ENCODE measurements at regions of chr10 and their contacts with region 1.

Region 1: GRCh38 chr10:69092959-69093850 is 5.3 kb downstream of the SRGN start:
- DNase-seq: peak; percentile 84 to 89
- H3K4me3 ChIP-seq: no peak overlapping the region
- CTCF ChIP-seq: no peak
- POLR2A ChIP-seq: no peak

Region 2: GRCh38 chr10:68861253-68861652 is 232.0 kb before region 1 on chr10:
- intact Hi-C with region 1: no loop called
- DNase-seq: peak in 1 of 2 donors; percentile 14
- H3K4me3 ChIP-seq: no peak overlapping the region
- CTCF ChIP-seq: no peak
- POLR2A ChIP-seq: no peak

Region 3: DNA sequence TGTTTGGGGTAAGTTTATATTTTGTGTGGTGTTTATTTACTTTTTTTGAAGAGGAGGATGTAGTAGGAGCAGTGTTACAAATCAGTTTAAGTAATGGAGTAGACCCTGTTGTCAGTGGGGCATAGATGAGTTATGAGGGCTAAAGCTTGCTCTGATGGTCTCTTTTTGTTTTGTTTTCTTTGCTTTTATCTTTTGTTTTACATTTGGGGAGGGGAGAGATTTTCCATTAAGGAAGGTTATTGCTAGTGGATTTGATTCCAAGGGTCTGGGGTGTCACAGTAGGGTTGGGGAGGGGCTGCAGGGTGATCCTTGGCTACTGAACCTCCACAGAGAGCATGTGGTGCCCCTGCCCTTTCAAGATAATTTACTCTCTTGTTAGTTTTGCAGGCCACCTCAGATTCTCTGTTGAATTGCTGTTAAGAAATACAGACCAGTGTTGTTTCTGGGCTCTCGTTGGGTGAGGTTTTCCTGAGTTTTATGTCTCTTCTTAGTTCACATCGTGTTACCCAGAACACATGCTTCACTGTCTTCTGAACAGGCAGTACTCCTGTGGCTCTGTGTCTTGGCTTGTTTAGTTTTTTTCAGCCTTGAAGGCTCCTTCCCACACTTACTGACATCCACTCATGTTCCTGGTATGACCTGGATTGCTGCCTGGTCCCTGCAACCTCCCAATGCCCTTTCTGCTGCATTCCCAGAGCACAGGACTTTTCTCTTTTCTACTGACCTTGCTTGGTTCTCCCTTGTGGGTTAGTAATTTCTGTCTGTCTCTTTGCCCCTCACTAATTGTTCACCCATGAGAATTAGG is 100.4 kb before region 1 on chr10:
- intact Hi-C with region 1: loop called (anchors 10 kb)
- DNase-seq: peak in 1 of 2 donors; percentile 23
- H3K4me3 ChIP-seq: no peak overlapping the region
- CTCF ChIP-seq: no peak
- POLR2A ChIP-seq: no peak

Region 4: GRCh38 chr10:69025370-69025896 is 67.8 kb before region 1 on chr10:
- intact Hi-C with region 1: no loop called
- DNase-seq: no peak
- H3K4me3 ChIP-seq: no peak overlapping the region
- CTCF ChIP-seq: no peak
- POLR2A ChIP-seq: no peak